ENCODE measurements at regions of chr1 and their contacts with region 1.

Region 1: GRCh38 chr1:15771836-15772515 is 13.4 kb downstream of the FBLIM1 start:
- DNase-seq: no peak
- H3K27ac ChIP-seq: peak overlapping the region; percentile 53
- CTCF ChIP-seq: no peak

Region 2: DNA sequence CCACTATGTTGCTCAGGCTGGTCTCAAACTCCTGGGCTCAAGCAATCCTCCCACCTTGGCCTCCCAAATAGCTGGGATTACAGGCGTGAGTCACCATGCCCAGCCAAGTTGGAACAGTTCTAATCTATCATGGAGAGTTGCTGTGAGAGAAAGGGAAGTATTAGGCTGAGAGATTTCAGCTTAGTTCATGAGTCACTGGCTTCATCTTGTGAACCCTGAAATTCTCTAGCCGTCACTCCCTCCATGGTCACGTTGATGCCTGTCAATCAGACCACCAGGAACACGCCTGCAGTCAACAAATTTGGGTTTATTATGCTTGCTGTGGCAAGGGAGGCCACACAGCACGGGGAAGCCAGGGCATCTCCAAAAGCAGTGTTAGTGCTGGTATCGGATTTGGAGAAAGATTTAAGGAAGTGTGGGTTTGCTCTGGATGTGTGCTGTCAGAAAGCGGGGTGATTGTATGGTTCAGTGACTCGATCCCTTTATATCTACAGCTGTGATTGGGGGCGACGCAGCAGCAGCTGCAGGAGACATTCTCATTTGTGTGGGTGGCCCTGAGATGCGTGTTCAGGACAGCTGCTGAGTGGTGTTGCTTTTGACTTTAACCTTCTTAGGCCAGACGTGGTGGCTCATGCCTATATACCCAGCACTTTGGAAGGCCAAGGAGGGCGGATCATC is 16.8 kb after region 1 on chr1:
- CTCF ChIA-PET with region 1: interaction called, 4 read pairs
- POLR2A ChIA-PET with region 1: interaction called, 10 read pairs
- DNase-seq: peak; percentile 46
- H3K27ac ChIP-seq: peak overlapping the region; percentile 98
- CTCF ChIP-seq: no peak

Measured in RWPE1 (cell line).